A673 (cell line): ENCODE measurements at regions of chr1 and their contacts with region 1.

Region 1: DNA sequence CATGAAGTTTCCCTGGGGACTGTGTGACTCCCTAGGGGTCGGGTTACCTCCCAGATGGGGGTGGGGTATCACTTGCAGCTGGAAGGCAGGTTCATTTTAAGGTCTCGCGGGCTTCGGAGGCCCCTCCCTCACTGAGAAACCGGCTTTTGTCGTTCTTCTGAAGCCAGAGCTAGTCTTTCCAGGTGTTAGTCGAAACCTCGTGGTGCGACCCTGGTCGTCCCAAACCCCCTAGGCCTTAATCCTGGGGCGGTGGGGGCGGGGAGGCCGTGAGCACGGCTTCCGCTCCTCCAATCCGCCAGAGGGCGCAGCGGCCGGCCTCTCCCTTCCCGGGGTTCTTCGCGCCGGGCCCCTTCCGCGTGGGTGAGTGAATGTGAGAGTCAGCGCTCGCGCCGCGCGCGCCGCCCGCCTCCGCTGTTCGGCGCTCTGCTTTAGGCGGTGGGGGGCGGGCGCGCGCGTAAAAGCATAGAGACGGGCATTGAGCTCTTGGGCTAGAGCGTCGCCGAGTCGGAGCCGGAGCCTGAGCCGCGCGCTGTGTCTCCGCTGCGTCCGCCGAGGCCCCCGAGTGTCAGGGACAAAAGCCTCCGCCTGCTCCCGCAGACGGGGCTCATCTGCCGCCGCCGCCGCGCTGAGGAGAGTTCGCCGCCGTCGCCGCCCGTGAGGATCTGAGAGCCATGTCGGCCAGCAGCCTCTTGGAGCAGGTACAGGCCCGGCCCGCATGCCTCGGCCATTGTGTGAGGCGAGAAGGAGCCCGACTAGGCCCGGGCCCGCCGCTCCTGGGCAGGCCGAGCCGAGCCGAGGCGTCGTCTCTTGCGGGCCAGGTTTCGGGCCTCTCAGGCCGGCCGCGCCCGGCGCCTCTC is at the start of gene YTHDF2:
- DNase-seq: peak; percentile 99
- H3K4me3 ChIP-seq: peak within 1 kb of the TSS; percentile 77
- H3K27ac ChIP-seq: peak within 1 kb of the TSS; percentile 94
- H3K4me1 ChIP-seq: peaks cover 32% of the 10 kb centered on the region
- H3K27me3 ChIP-seq: no peaks in the 10 kb centered on the region
- CTCF ChIP-seq: peak; percentile 97
- total RNA-seq, gene YTHDF2: 99.6 and 111 TPM in 2 replicates

Region 2: GRCh38 chr1:28193701-28194161 is 542.9 kb before region 1 on chr1:
- CTCF ChIA-PET with region 1: no interaction called
- POLR2A ChIA-PET with region 1: interaction called, 11 read pairs
- intact Hi-C with region 1: no loop called
- DNase-seq: no peak
- H3K4me3 ChIP-seq: no peak overlapping the region
- H3K27ac ChIP-seq: no peak overlapping the region
- H3K4me1 ChIP-seq: no peaks in the 10 kb centered on the region
- H3K27me3 ChIP-seq: no peaks in the 10 kb centered on the region
- CTCF ChIP-seq: no peak

Region 3: GRCh38 chr1:28526889-28527288 is 209.8 kb before region 1 on chr1:
- CTCF ChIA-PET with region 1: no interaction called
- POLR2A ChIA-PET with region 1: no interaction called
- intact Hi-C with region 1: no loop called
- DNase-seq: no peak
- H3K4me3 ChIP-seq: no peak overlapping the region
- H3K27ac ChIP-seq: no peak overlapping the region
- H3K4me1 ChIP-seq: peaks cover 6% of the 10 kb centered on the region
- H3K27me3 ChIP-seq: no peaks in the 10 kb centered on the region
- CTCF ChIP-seq: no peak

Region 4: GRCh38 chr1:28642847-28643635 is 93.6 kb before region 1 on chr1 and contains the start of gene TAF12:
- CTCF ChIA-PET with region 1: interaction called, 13 read pairs
- POLR2A ChIA-PET with region 1: interaction called, 7 read pairs
- intact Hi-C with region 1: loop called (anchors 2 kb)
- DNase-seq: peak; percentile 98
- H3K4me3 ChIP-seq: peak within 1 kb of the TSS; percentile 81
- H3K27ac ChIP-seq: peak within 1 kb of the TSS; percentile 82
- H3K4me1 ChIP-seq: peaks cover 16% of the 10 kb centered on the region
- H3K27me3 ChIP-seq: no peaks in the 10 kb centered on the region
- CTCF ChIP-seq: peak; percentile 54
- total RNA-seq, gene TAF12: 17.9 and 22.6 TPM in 2 replicates

Region 5: GRCh38 chr1:28668191-28668955 is 68.3 kb before region 1 on chr1 and contains the start of gene GMEB1:
- CTCF ChIA-PET with region 1: interaction called, 18 read pairs
- POLR2A ChIA-PET with region 1: no interaction called
- intact Hi-C with region 1: no loop called
- DNase-seq: peak; percentile 93
- H3K4me3 ChIP-seq: peak within 1 kb of the TSS; percentile 87
- H3K27ac ChIP-seq: peak within 1 kb of the TSS; percentile 96
- H3K4me1 ChIP-seq: peaks cover 9% of the 10 kb centered on the region
- H3K27me3 ChIP-seq: no peaks in the 10 kb centered on the region
- CTCF ChIP-seq: no peak
- total RNA-seq, gene GMEB1: 20.9 and 23.0 TPM in 2 replicates

Region 6: GRCh38 chr1:28836421-28836956 is 99.8 kb after region 1 on chr1:
- CTCF ChIA-PET with region 1: interaction called, 11 read pairs
- POLR2A ChIA-PET with region 1: interaction called, 5 read pairs
- intact Hi-C with region 1: no loop called
- DNase-seq: no peak
- H3K4me3 ChIP-seq: no peak overlapping the region
- H3K27ac ChIP-seq: no peak overlapping the region
- H3K4me1 ChIP-seq: no peaks in the 10 kb centered on the region
- H3K27me3 ChIP-seq: no peaks in the 10 kb centered on the region
- CTCF ChIP-seq: no peak